Heart left ventricle (tissue), 16 donors: ENCODE measurements at regions of chr21 and their contacts with region 1.

Region 1: GRCh38 chr21:43585924-43586424 is 73.3 kb downstream of the HSF2BP start:
- DNase-seq: peak in 4 of 5 donors; percentile 50 to 71 (median 60)
- ATAC-seq: peak; percentile 96 to 98 (median 98)
- H3K4me3 ChIP-seq: peak overlapping the region in 1 of 12 donors; percentile 3
- H3K27ac ChIP-seq: peak overlapping the region; percentile 30 to 92 (median 69)
- H3K4me1 ChIP-seq: peaks cover 0 to 23% (median 15%) of the 10 kb centered on the region in 12 donors
- H3K27me3 ChIP-seq: no peaks in the 10 kb centered on the region
- CTCF ChIP-seq: no peak
- POLR2A ChIP-seq: peak in 1 of 2 donors; percentile 15

Region 2: GRCh38 chr21:43262427-43262826 is 323.5 kb before region 1 on chr21:
- intact Hi-C with region 1: no loop called
- DNase-seq: peak in 3 of 5 donors; percentile 4 to 21 (median 15)
- ATAC-seq: peak; percentile 58 to 90 (median 68)
- H3K4me3 ChIP-seq: no peak overlapping the region
- H3K27ac ChIP-seq: no peak overlapping the region
- H3K4me1 ChIP-seq: no peaks in the 10 kb centered on the region
- H3K27me3 ChIP-seq: no peaks in the 10 kb centered on the region
- CTCF ChIP-seq: no peak
- POLR2A ChIP-seq: no peak

Region 3: DNA sequence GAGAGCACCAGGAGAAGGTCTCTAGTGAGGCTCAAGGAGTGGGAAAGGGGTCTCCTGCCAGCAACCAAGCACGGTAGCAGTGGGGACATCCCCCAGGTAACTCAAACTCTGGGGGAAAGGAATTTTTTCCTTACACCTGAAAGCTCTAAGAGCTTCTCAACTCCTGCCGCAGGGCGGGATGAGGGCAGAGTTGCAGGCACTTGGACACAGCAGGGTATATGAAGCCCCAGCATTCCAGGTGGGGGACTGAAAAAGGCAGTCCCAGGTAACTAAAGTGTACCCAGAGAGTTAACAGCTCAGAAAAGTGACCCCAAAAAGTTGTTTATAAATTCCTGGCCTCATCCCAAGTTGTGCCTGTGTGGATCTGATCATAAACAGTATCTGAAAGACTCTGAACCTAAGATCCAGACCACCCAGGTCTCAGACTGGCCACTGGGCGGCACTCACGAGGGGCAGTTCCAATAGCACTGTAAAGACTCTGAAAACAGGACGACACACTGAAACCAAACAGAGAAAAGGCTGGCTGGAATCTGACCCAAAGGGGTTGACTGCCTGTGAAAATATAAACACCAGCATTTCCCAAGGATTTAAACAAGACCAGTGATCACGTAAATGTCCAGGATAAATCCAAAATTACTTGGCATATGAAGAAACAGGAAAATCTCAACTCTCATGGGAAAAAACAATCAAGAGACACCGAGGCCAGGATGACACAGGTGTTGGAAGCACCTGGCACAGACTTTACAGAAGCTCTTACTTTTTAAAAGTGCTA is 25.8 kb after region 1 on chr21:
- intact Hi-C with region 1: loop called in 1 of 10 experiments (anchors 2 kb)
- DNase-seq: peak; percentile 52 to 70 (median 66)
- ATAC-seq: peak; percentile 40 to 88 (median 84)
- H3K4me3 ChIP-seq: no peak overlapping the region
- H3K27ac ChIP-seq: no peak overlapping the region
- H3K4me1 ChIP-seq: peaks cover 0 to 17% (median 6%) of the 10 kb centered on the region in 12 donors
- H3K27me3 ChIP-seq: no peaks in the 10 kb centered on the region
- CTCF ChIP-seq: peak; percentile 57 to 81 (median 70)
- POLR2A ChIP-seq: no peak

Region 4: GRCh38 chr21:43622796-43623195 is 36.8 kb after region 1 on chr21:
- intact Hi-C with region 1: loop called in 1 of 10 experiments (anchors 2 kb)
- DNase-seq: no peak
- ATAC-seq: no peak
- H3K4me3 ChIP-seq: no peak overlapping the region
- H3K27ac ChIP-seq: no peak overlapping the region
- H3K4me1 ChIP-seq: no peaks in the 10 kb centered on the region
- H3K27me3 ChIP-seq: no peaks in the 10 kb centered on the region
- CTCF ChIP-seq: no peak
- POLR2A ChIP-seq: no peak

Region 5: GRCh38 chr21:43646550-43647260 is 60.7 kb after region 1 on chr21:
- intact Hi-C with region 1: no loop called
- DNase-seq: peak; percentile 89 to 94 (median 92)
- ATAC-seq: peak; percentile 91 to 97 (median 96)
- H3K4me3 ChIP-seq: peak overlapping the region in 1 of 12 donors; percentile 19
- H3K27ac ChIP-seq: peak overlapping the region in 9 of 12 donors; percentile 11 to 77 (median 52)
- H3K4me1 ChIP-seq: peaks cover 0 to 23% (median 10%) of the 10 kb centered on the region in 12 donors
- H3K27me3 ChIP-seq: no peaks in the 10 kb centered on the region
- CTCF ChIP-seq: peak; percentile 99 to 100 (median 99)
- POLR2A ChIP-seq: no peak